CD14-positive monocyte (primary cell): ENCODE measurements at regions of chr11 and their contacts with region 1.

Region 1: DNA sequence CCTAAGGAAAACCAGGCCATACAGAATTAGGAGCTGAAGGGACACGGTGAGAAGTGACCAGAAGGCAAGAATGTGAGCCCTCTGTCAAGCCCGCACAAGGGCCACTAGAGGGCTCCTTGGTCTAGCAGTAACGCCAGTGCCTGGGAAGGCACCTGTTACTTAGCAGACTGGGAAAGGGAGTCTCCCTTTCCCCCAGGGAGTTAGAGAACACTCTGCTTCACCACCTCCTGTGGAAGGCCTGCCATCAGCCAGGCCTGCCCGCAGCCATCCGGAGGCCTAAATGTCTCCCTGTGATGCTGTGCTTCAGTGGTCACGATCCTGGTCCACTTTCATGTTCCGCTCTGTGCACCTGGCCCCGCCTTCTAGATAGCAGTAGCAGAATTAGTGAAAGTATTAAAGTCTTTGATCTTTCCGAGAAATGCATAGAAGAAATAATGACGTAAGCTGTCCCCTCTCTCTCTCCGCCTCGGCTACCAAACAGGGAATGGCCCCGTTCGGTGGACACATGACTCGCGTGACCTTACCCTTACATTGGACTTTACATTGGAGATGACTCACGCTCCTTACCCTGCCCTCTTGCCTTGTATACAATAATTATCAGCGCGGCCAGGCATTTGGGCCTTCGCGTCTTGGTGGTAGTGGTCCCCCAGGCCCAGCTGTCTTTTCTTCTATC is 10.7 kb upstream of the GSTP1 start:
- DNase-seq: peak; percentile 38 to 60 (median 59)
- H3K4me3 ChIP-seq: no peak overlapping the region
- H3K4me3 Mint-ChIP-seq: no peak overlapping the region
- H3K27ac ChIP-seq: no peak overlapping the region
- H3K27ac Mint-ChIP-seq: no peak overlapping the region
- H3K4me1 ChIP-seq: no peaks in the 10 kb centered on the region
- H3K4me1 Mint-ChIP-seq: peaks cover 4% of the 10 kb centered on the region
- H3K27me3 ChIP-seq: no peaks in the 10 kb centered on the region
- H3K27me3 Mint-ChIP-seq: peaks cover 8 to 18% (median 17%) of the 10 kb centered on the region in 3 donors
- CTCF ChIP-seq: peak; percentile 86

Region 2: GRCh38 chr11:67082035-67082791 is 490.7 kb before region 1 on chr11:
- intact Hi-C with region 1: no loop called
- DNase-seq: peak in 2 of 3 donors; percentile 16 to 25
- H3K4me3 ChIP-seq: peak overlapping the region in 1 of 3 experiments; percentile 25
- H3K4me3 Mint-ChIP-seq: peak overlapping the region; percentile 68 to 70
- H3K27ac ChIP-seq: no peak overlapping the region
- H3K27ac Mint-ChIP-seq: peak overlapping the region in 1 of 7 donors; percentile 66
- H3K4me1 ChIP-seq: peaks cover 28 to 34% of the 10 kb centered on the region in 2 donors
- H3K4me1 Mint-ChIP-seq: peaks cover 34% of the 10 kb centered on the region
- H3K27me3 ChIP-seq: peaks cover 0 to 8% of the 10 kb centered on the region in 2 donors
- H3K27me3 Mint-ChIP-seq: peaks cover 5 to 20% (median 14%) of the 10 kb centered on the region in 3 donors
- CTCF ChIP-seq: no peak

Region 3: GRCh38 chr11:67118801-67119584 is 453.9 kb before region 1 on chr11 and contains the start of gene KDM2A:
- intact Hi-C with region 1: no loop called
- DNase-seq: peak; percentile 98 to 100 (median 99)
- H3K4me3 ChIP-seq: peak within 1 kb of the TSS; percentile 94 to 100 (median 99)
- H3K4me3 Mint-ChIP-seq: peak within 1 kb of the TSS; percentile 97
- H3K27ac ChIP-seq: peak within 1 kb of the TSS; percentile 91 to 94
- H3K27ac Mint-ChIP-seq: peak within 1 kb of the TSS; percentile 95 to 97 (median 97)
- H3K4me1 ChIP-seq: peaks cover 57 to 68% of the 10 kb centered on the region in 2 donors
- H3K4me1 Mint-ChIP-seq: peaks cover 53% of the 10 kb centered on the region
- H3K27me3 ChIP-seq: no peaks in the 10 kb centered on the region
- H3K27me3 Mint-ChIP-seq: peaks cover 0 to 2% (median 0%) of the 10 kb centered on the region in 3 donors
- CTCF ChIP-seq: peak; percentile 25
- polyA plus RNA-seq, gene KDM2A: 2.6 to 98.9 (median 3.9) TPM

Region 4: GRCh38 chr11:67516806-67517205 is 56.1 kb before region 1 on chr11:
- intact Hi-C with region 1: no loop called
- DNase-seq: no peak
- H3K4me3 ChIP-seq: no peak overlapping the region
- H3K4me3 Mint-ChIP-seq: no peak overlapping the region
- H3K27ac ChIP-seq: no peak overlapping the region
- H3K27ac Mint-ChIP-seq: no peak overlapping the region
- H3K4me1 ChIP-seq: no peaks in the 10 kb centered on the region
- H3K4me1 Mint-ChIP-seq: peaks cover 3% of the 10 kb centered on the region
- H3K27me3 ChIP-seq: peaks cover 0 to 6% of the 10 kb centered on the region in 2 donors
- H3K27me3 Mint-ChIP-seq: peaks cover 4 to 21% (median 10%) of the 10 kb centered on the region in 3 donors
- CTCF ChIP-seq: no peak

Region 5: GRCh38 chr11:67606492-67607201 is 33.8 kb after region 1 on chr11 and contains the start of gene NDUFV1:
- intact Hi-C with region 1: loop called (anchors 5 kb)
- DNase-seq: peak; percentile 87 to 92 (median 90)
- H3K4me3 ChIP-seq: peak within 1 kb of the TSS; percentile 63 to 85 (median 74)
- H3K4me3 Mint-ChIP-seq: peak within 1 kb of the TSS; percentile 82 to 96
- H3K27ac ChIP-seq: peak within 1 kb of the TSS; percentile 25 to 85
- H3K27ac Mint-ChIP-seq: peak within 1 kb of the TSS; percentile 76 to 94 (median 82)
- H3K4me1 ChIP-seq: peaks cover 14 to 20% of the 10 kb centered on the region in 2 donors
- H3K4me1 Mint-ChIP-seq: peaks cover 11% of the 10 kb centered on the region
- H3K27me3 ChIP-seq: no peaks in the 10 kb centered on the region
- H3K27me3 Mint-ChIP-seq: peaks cover 2 to 9% (median 3%) of the 10 kb centered on the region in 3 donors
- CTCF ChIP-seq: peak; percentile 80
- polyA plus RNA-seq, gene NDUFV1: 71.6 to 174 (median 72.1) TPM

Region 6: GRCh38 chr11:67640021-67640757 is 67.3 kb after region 1 on chr11:
- intact Hi-C with region 1: no loop called
- DNase-seq: peak; percentile 40 to 63 (median 40)
- H3K4me3 ChIP-seq: no peak overlapping the region
- H3K4me3 Mint-ChIP-seq: no peak overlapping the region
- H3K27ac ChIP-seq: no peak overlapping the region
- H3K27ac Mint-ChIP-seq: peak overlapping the region in 1 of 7 donors; percentile 66
- H3K4me1 ChIP-seq: peaks cover 0 to 10% of the 10 kb centered on the region in 2 donors
- H3K4me1 Mint-ChIP-seq: peaks cover 9% of the 10 kb centered on the region
- H3K27me3 ChIP-seq: no peaks in the 10 kb centered on the region
- H3K27me3 Mint-ChIP-seq: peaks cover 2 to 11% (median 4%) of the 10 kb centered on the region in 3 donors
- CTCF ChIP-seq: peak; percentile 71

Region 7: GRCh38 chr11:67656278-67656922 is 83.5 kb after region 1 on chr11:
- intact Hi-C with region 1: loop called in 1 of 2 experiments (anchors 5 kb)
- DNase-seq: peak; percentile 34 to 54 (median 52)
- H3K4me3 ChIP-seq: no peak overlapping the region
- H3K4me3 Mint-ChIP-seq: no peak overlapping the region
- H3K27ac ChIP-seq: no peak overlapping the region
- H3K27ac Mint-ChIP-seq: no peak overlapping the region
- H3K4me1 ChIP-seq: no peaks in the 10 kb centered on the region
- H3K4me1 Mint-ChIP-seq: no peaks in the 10 kb centered on the region
- H3K27me3 ChIP-seq: no peaks in the 10 kb centered on the region
- H3K27me3 Mint-ChIP-seq: peaks cover 2 to 6% (median 2%) of the 10 kb centered on the region in 3 donors
- CTCF ChIP-seq: no peak

Region 8: DNA sequence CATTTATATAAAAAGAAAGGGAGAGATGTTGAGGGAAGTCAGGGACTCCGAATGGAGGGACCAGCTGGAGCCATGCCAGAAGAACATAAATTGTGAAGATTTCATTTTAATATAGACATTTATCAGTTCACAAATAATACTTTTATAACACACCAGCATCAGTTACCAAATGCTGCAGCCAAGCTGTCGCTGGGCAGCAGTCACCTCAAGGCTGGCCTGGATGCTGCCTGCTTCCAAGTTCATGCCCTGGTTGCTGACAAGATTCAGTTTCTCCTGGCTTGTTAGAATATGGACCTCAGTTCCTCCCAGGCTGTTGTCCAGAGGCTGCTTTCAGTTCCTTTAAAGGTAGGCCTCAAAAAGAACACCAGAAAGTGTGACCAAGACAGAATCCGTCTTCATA is 132.4 kb after region 1 on chr11:
- intact Hi-C with region 1: loop called in 1 of 2 experiments (anchors 5 kb)
- DNase-seq: no peak
- H3K4me3 ChIP-seq: no peak overlapping the region
- H3K4me3 Mint-ChIP-seq: no peak overlapping the region
- H3K27ac ChIP-seq: no peak overlapping the region
- H3K27ac Mint-ChIP-seq: no peak overlapping the region
- H3K4me1 ChIP-seq: no peaks in the 10 kb centered on the region
- H3K4me1 Mint-ChIP-seq: no peaks in the 10 kb centered on the region
- H3K27me3 ChIP-seq: no peaks in the 10 kb centered on the region
- H3K27me3 Mint-ChIP-seq: peaks cover 2 to 16% (median 9%) of the 10 kb centered on the region in 3 donors
- CTCF ChIP-seq: no peak